ENCODE measurements at regions of chr3 and their contacts with region 1.

Region 1: GRCh38 chr3:173584093-173584837 is 186.7 kb downstream of the NLGN1 start:
- DNase-seq: no peak
- ATAC-seq: peak; percentile 78
- H3K4me3 ChIP-seq: peak overlapping the region; percentile 46 to 97
- H3K27ac ChIP-seq: no peak overlapping the region
- H3K4me1 ChIP-seq: peaks cover 0 to 1% of the 10 kb centered on the region in 2 donors
- H3K27me3 ChIP-seq: no peaks in the 10 kb centered on the region

Region 2: DNA sequence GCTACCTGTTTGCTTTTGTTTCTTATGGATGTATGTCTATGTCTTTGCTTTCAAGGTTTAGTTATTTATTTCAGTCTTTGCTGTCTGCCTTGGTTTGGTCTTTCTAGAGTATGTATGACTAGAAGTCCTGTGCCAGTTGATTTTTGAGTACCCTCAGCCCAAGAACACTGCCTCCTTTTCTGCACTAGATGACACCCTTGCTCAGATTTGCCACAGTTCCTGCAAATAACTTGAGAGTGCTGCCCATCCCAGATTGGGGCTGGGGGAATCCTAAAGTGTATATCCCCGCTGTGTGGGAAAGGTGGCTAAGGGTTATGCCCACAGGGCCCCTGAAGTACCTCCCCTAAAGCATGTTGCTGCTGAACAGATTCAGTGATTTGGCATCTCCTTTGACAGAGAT is 154.7 kb before region 1 on chr3:
- intact Hi-C with region 1: no loop called
- DNase-seq: no peak
- ATAC-seq: no peak
- H3K4me3 ChIP-seq: no peak overlapping the region
- H3K27ac ChIP-seq: no peak overlapping the region
- H3K4me1 ChIP-seq: no peaks in the 10 kb centered on the region
- H3K27me3 ChIP-seq: no peaks in the 10 kb centered on the region

Region 3: DNA sequence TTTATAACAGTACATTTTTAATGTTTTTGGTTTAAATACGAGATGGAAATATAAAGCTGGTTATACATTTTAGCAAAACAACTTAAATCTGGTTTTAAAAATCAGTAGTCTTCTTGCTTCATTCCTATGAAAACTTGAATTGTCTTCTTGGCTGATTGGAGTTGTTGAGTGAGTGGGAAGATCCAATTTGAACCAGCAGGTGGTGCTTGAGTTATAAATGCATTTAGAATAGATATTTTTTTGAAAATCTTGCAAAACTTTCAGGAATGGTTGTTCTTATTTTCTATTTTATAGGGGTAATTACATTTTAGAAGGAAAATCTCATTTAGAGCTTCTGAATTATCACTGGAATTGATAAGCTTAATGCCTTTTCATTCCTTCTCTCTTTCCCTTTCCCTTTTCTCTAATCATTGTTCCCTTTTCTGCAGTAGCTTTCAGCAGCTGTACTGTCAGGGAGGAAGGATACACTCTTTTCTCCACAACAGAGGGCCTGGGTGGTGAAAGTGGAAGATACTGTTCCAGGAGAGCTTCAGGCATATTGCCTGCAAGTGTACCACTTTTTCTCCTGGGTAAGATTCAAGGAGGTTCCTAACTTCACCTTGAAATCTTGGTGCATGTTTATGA is 148.9 kb after region 1 on chr3:
- intact Hi-C with region 1: loop called in 1 of 2 experiments (anchors 10 kb)
- DNase-seq: no peak
- ATAC-seq: no peak
- H3K4me3 ChIP-seq: no peak overlapping the region
- H3K27ac ChIP-seq: no peak overlapping the region
- H3K4me1 ChIP-seq: no peaks in the 10 kb centered on the region
- H3K27me3 ChIP-seq: no peaks in the 10 kb centered on the region

Measured in aorta (tissue), 5 donors.